ENCODE measurements at regions of chr4 and their contacts with region 1.

Region 1: GRCh38 chr4:147518846-147519767 is 38.2 kb downstream of the EDNRA start:
- DNase-seq: peak; percentile 19
- H3K4me3 Mint-ChIP-seq: no peak overlapping the region
- H3K27ac Mint-ChIP-seq: no peak overlapping the region
- H3K4me1 Mint-ChIP-seq: no peaks in the 10 kb centered on the region
- H3K27me3 Mint-ChIP-seq: peaks cover 1% of the 10 kb centered on the region

Region 2: GRCh38 chr4:147508346-147508745 is 10.8 kb before region 1 on chr4:
- intact Hi-C with region 1: no loop called
- DNase-seq: no peak
- H3K4me3 Mint-ChIP-seq: no peak overlapping the region
- H3K27ac Mint-ChIP-seq: no peak overlapping the region
- H3K4me1 Mint-ChIP-seq: no peaks in the 10 kb centered on the region
- H3K27me3 Mint-ChIP-seq: peaks cover 13% of the 10 kb centered on the region

Region 3: GRCh38 chr4:147707865-147708672 is 189.0 kb after region 1 on chr4:
- intact Hi-C with region 1: loop called (anchors 10 kb)
- DNase-seq: no peak
- H3K4me3 Mint-ChIP-seq: no peak overlapping the region
- H3K27ac Mint-ChIP-seq: no peak overlapping the region
- H3K4me1 Mint-ChIP-seq: peaks cover 8% of the 10 kb centered on the region
- H3K27me3 Mint-ChIP-seq: peaks cover 6% of the 10 kb centered on the region

Measured in activated T-helper 2 cell treated with anti-CD3 and anti-CD28 coated beads, Interferon-gamma antibody, Interleukin-2, Interleukin-4, amounts not matched to agents 10 μg/mL and 5 μg/mL and 100 μg/mL, durations not matched to agents 14 hours and 24 hours and 36 hours (primary cell).